ENCODE measurements at regions of chr16 and their contacts with region 1.

Region 1: DNA sequence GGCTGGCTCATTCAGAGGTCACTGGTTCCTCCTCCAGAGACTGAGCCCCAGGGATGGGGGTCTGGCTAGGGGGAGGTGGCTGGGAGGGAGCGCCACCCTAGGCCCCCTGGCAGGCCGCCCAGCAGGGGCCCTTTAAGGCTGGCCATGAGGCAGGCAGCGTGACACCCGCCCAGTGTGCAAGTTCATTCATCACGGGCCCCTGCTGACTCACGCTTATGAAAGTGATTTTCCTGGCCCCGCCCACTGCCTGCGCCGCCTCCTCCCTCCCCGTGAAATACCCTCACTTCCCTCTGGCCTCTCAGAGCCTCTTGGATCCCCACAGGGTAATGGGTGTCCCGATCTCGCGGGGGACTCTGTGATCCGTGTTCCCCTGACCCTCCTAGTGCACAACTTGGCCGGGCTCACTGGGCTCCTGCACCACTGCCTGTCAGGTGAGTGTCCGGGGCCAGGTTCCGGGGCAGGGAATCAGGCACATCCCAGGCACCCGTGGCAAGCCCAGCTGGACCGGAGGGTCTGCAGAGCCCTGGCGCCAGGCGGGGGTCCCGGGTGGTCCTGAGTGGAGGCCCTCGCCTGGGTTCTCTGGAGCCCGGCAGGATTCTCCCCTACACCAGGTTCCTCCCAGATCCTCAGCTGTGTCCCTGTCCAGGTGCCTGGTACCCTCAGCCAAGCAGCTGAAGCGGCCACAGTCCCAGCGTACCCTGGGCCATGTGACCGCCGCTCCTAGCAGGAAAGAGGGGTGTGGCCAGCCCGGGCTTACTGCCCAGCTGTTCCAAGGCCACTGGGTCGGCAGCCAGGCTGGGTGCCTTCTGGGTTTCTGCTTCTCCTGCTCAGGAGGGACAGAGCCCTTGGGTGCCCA is at the start of gene OSGIN1:
- DNase-seq: peak; percentile 72
- H3K4me3 Mint-ChIP-seq: peak within 1 kb of the TSS; percentile 74
- H3K27ac Mint-ChIP-seq: peak within 1 kb of the TSS; percentile 35
- H3K4me1 Mint-ChIP-seq: peaks cover 11% of the 10 kb centered on the region
- H3K27me3 Mint-ChIP-seq: peaks cover 10% of the 10 kb centered on the region
- total RNA-seq, gene OSGIN1: 1.4 and 2.1 TPM in 2 replicates

Region 2: GRCh38 chr16:83887081-83887480 is 66.1 kb before region 1 on chr16:
- intact Hi-C with region 1: no loop called
- DNase-seq: no peak
- H3K4me3 Mint-ChIP-seq: no peak overlapping the region
- H3K27ac Mint-ChIP-seq: no peak overlapping the region
- H3K4me1 Mint-ChIP-seq: no peaks in the 10 kb centered on the region
- H3K27me3 Mint-ChIP-seq: peaks cover 2% of the 10 kb centered on the region

Region 3: GRCh38 chr16:83898463-83899271 is 54.5 kb before region 1 on chr16 and contains the start of gene MLYCD:
- intact Hi-C with region 1: loop called (anchors 2 kb)
- DNase-seq: peak; percentile 71
- H3K4me3 Mint-ChIP-seq: peak within 1 kb of the TSS; percentile 97
- H3K27ac Mint-ChIP-seq: peak within 1 kb of the TSS; percentile 75
- H3K4me1 Mint-ChIP-seq: peaks cover 22% of the 10 kb centered on the region
- H3K27me3 Mint-ChIP-seq: peaks cover 13% of the 10 kb centered on the region
- total RNA-seq, gene MLYCD: 6.1 TPM in 2 replicates

Region 4: DNA sequence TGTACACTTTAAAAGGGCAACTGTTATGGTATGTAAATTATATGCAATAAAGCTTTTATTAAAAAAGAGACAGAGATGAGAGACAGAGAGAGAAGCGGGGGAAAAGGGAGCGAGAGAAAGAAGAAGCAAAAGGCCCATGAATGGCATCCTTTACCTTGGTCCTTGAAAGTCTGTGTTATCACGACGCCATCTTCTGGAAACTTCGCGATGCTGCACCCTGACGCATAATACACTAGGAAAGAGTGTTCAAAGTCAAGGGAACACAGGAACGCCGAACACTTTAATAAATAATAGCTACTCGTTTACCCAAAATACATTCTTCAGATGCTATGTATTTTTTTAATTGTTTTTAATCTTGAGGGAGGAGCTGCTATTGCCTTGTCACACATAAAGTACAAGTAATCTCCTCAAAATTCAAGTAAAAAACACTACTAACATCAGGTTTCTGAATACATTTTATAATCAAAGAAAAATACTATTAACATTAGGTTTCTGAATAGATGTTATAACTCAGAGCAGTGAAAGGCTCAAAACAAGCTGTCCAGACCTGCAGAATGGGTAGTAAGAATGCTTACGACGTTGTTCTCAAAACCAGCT is 112.5 kb after region 1 on chr16:
- intact Hi-C with region 1: loop called (anchors 1 kb)
- DNase-seq: no peak
- H3K4me3 Mint-ChIP-seq: no peak overlapping the region
- H3K27ac Mint-ChIP-seq: no peak overlapping the region
- H3K4me1 Mint-ChIP-seq: peaks cover 3% of the 10 kb centered on the region
- H3K27me3 Mint-ChIP-seq: no peaks in the 10 kb centered on the region

Region 5: DNA sequence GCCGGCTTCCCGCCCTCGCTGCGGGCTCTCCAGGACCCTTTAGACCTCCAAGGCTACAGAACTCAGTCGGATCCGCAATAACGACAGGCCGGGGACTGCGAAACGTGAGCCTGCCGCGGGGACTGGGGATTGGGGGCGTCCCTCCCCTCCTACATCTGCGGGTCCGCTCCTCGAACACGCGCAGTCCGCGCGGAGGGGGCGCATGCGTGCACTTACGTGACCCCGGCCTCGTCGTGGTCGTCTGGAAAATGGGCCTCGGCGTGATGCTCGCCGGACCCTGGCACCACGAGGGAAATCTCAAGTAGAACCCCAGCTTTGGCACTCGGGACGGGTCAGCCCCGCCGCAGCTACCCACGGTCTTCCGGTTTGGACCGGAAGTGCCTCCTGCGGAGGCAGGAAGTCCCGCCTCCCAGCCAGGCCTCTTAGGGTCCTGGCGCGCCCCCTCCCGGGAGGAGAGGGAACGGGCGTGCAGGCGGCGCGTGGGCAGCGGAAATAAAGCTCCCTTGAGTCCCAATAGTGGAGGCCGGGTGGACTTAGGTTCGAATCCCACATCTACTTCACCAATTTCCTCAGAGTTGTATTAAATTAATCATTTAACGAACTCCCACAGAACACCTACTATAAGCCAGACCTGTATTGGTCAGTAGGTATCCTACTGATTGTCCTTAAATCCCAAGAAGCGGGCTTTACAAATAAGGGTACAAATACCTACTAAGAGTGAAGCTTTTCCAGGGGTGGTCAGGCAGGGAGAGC is 233.7 kb after region 1 on chr16 and contains the start of gene TAF1C:
- intact Hi-C with region 1: loop called (anchors 2 kb)
- DNase-seq: peak; percentile 83
- H3K4me3 Mint-ChIP-seq: peak within 1 kb of the TSS; percentile 93
- H3K27ac Mint-ChIP-seq: peak within 1 kb of the TSS; percentile 84
- H3K4me1 Mint-ChIP-seq: peaks cover 11% of the 10 kb centered on the region
- H3K27me3 Mint-ChIP-seq: no peaks in the 10 kb centered on the region
- total RNA-seq, gene TAF1C: 57.5 and 64.4 TPM in 2 replicates

Region 6: GRCh38 chr16:84504420-84505248 is 551.5 kb after region 1 on chr16 and contains the start of gene MEAK7:
- intact Hi-C with region 1: loop called (anchors 2 kb)
- DNase-seq: peak; percentile 96
- H3K4me3 Mint-ChIP-seq: peak within 1 kb of the TSS; percentile 88
- H3K27ac Mint-ChIP-seq: peak within 1 kb of the TSS; percentile 89
- H3K4me1 Mint-ChIP-seq: peaks cover 44% of the 10 kb centered on the region
- H3K27me3 Mint-ChIP-seq: no peaks in the 10 kb centered on the region
- total RNA-seq, gene MEAK7: 15.4 and 19.4 TPM in 2 replicates